Mammary epithelial cell (primary cell): ENCODE measurements at regions of chr17 and their contacts with region 1.

Region 1: DNA sequence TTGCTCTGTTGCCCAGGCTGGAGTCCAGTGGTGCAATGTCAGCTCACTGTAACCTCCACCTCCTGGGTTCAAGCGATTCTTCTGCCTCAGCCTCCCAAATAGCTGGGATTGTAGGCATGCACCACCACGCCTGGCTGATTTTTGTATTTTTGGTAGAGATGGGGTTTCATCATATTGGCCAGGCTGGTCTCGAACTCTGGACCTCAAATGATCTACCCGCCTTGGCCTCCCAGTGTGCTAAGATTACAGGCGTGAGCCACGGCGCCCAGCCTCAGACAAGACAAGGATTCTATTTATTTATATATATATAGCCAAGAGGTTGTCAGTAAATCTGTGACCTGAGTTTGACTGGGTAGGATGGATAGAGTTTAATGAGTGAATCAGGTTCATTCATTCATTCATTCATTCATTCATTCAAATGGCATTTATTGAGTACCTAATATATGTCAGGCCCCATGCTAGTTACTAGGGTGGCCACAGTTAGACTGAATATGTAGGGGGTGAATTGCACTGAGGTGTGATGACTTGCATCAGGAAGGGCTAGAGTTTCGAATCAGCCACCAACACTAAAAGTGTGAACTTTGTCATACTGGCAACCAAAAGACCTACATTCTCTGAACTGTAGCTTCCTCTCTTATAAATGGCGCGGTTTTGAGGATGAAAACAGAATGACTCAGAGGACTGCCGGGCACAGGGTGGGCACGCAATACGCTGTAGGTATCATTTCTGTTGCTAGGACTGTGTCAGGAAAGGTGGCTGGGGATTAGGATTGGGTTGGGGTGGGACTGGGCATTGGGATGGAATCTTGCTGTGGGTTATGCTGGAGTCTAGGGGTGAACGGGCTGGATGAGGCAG is 37.8 kb downstream of the ITGAE start:
- DNase-seq: no peak
- H3K4me3 ChIP-seq: no peak overlapping the region
- H3K27ac ChIP-seq: no peak overlapping the region
- H3K4me1 ChIP-seq: no peaks in the 10 kb centered on the region
- H3K27me3 ChIP-seq: no peaks in the 10 kb centered on the region
- CTCF ChIP-seq: no peak

Region 2: DNA sequence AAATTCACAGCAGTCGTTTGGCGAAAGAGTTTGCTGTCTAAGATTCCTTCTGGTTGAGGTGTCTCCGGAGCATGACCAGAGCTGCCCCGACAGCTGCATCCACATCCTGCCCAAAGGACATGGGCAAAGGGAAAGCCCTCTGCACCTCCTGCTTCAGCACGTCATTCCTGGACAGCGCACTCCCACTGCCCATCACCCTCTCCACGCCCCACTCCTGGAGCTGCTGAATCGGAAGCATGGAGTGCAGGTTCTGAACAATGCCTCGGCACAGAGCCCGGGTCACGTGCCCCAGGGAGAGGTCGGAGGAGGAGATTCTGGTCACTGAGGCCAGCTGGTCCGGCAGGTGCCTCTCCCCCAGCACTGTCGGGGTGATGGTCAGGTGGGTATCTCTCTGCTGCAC is 152.6 kb before region 1 on chr17:
- CTCF ChIA-PET with region 1: no interaction called
- dilution Hi-C with region 1: no loop called
- in situ Hi-C with region 1: no loop called
- intact Hi-C with region 1: no loop called
- DNase-seq: no peak
- H3K4me3 ChIP-seq: no peak overlapping the region
- H3K27ac ChIP-seq: no peak overlapping the region
- H3K4me1 ChIP-seq: peaks cover 11% of the 10 kb centered on the region
- H3K27me3 ChIP-seq: no peaks in the 10 kb centered on the region
- CTCF ChIP-seq: no peak

Region 3: DNA sequence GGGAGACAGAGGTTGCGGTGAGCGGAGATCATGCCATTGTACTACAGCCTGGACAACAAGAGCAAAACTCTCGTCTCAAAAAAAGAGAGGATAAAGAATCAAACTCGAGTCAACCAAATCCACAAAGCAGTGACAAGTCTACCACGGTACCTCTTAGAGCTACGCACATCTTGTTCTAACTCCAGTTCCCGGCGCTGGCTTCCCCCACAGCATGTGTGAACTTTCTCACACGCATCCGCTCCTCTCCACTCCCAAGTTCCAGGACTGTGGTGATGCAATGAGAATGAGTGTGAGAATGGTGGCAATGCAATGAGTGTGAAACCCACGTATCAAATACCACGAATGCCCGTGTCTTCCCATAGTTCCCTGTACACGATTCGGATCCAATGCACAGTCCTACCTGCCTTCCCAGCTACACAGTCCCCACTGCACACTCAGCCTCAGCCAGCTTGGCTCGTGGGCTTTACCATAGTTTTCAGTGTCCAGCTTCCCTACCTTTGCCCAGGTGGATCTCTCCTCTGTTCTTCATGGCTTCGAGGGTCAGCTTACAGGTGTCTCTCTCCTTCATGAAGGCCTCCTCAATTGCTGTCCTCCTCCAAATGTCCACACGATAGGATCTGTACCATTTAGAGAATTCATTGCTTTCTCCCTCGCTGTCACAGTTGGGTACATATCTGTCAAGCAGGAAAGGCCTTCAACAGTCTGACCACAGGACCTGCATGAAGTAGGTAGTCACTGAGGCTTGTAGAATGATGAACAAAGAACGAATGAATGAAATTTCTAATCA is 58.0 kb before region 1 on chr17:
- CTCF ChIA-PET with region 1: no interaction called
- dilution Hi-C with region 1: loop called (anchors 5 kb)
- in situ Hi-C with region 1: no loop called
- intact Hi-C with region 1: no loop called
- DNase-seq: no peak
- H3K4me3 ChIP-seq: no peak overlapping the region
- H3K27ac ChIP-seq: no peak overlapping the region
- H3K4me1 ChIP-seq: no peaks in the 10 kb centered on the region
- H3K27me3 ChIP-seq: no peaks in the 10 kb centered on the region
- CTCF ChIP-seq: no peak

Region 4: DNA sequence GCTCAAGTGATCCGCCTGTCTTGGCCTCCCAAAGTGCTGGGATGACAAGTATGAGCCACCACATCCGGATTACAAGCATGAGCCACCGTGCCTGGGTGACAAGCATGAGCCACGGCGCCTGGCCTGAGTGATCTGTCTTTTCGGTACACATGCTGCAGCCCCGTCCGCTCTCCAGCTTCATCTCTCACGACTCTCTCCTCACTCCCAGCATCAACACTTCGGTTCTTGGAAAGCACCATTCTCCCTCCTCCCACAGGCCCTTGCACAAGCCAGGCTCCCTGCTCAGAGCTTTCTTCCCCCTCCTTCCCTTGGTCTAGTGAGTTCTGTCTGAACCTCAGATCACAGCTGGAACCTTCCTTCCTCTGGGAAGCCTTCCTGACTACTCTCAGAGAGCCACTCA is 89.4 kb after region 1 on chr17:
- CTCF ChIA-PET with region 1: no interaction called
- dilution Hi-C with region 1: loop called (anchors 5 kb)
- in situ Hi-C with region 1: no loop called
- intact Hi-C with region 1: no loop called
- DNase-seq: no peak
- H3K4me3 ChIP-seq: no peak overlapping the region
- H3K27ac ChIP-seq: no peak overlapping the region
- H3K4me1 ChIP-seq: peaks cover 3% of the 10 kb centered on the region
- H3K27me3 ChIP-seq: no peaks in the 10 kb centered on the region
- CTCF ChIP-seq: no peak

Region 5: GRCh38 chr17:3965118-3965803 is 202.1 kb after region 1 on chr17:
- CTCF ChIA-PET with region 1: no interaction called
- dilution Hi-C with region 1: loop called (anchors 10 kb)
- in situ Hi-C with region 1: no loop called
- intact Hi-C with region 1: no loop called
- DNase-seq: peak; percentile 21
- H3K4me3 ChIP-seq: no peak overlapping the region
- H3K27ac ChIP-seq: no peak overlapping the region
- H3K4me1 ChIP-seq: peaks cover 4% of the 10 kb centered on the region
- H3K27me3 ChIP-seq: peaks cover 19% of the 10 kb centered on the region
- CTCF ChIP-seq: no peak